PC-3 (cell line): ENCODE measurements at regions of chr20 and their contacts with region 1.

Region 1: GRCh38 chr20:49747707-49748524 is 34.2 kb upstream of the B4GALT5 start:
- DNase-seq: no peak
- ATAC-seq: no peak
- H3K4me3 ChIP-seq: no peak overlapping the region
- H3K27ac ChIP-seq: no peak overlapping the region
- H3K4me1 ChIP-seq: peaks cover 9% of the 10 kb centered on the region
- H3K27me3 ChIP-seq: no peaks in the 10 kb centered on the region
- CTCF ChIP-seq: no peak

Region 2: DNA sequence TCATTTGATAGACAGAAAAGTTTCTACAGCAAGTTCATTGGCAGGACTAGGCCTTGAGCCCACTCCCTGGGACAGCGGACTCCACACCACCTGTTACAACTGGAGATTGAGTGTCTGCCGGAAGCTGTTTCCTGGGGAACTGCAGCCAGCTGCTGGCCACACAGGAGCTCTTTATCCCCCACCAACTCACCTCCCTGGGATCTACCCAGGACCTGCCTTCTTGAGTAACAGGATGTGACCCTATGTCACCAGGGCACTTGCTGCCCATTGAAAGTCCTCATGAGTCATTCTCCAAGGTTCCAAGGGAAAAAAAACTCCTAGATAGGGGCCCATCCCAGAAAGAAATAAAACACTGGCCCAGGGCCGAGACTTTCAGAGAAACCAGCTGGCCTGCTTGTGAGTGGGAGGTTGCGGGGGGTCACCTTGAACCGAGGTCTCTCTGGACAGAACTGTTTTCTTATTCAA is 27.3 kb after region 1 on chr20:
- CTCF ChIA-PET with region 1: no interaction called
- POLR2A ChIA-PET with region 1: interaction called, 31 read pairs
- intact Hi-C with region 1: no loop called
- DNase-seq: peak; percentile 88
- ATAC-seq: peak; percentile 76
- H3K4me3 ChIP-seq: no peak overlapping the region
- H3K27ac ChIP-seq: peak overlapping the region; percentile 66
- H3K4me1 ChIP-seq: peaks cover 37% of the 10 kb centered on the region
- H3K27me3 ChIP-seq: no peaks in the 10 kb centered on the region
- CTCF ChIP-seq: no peak